Sigmoid colon (tissue), 7 donors: ENCODE measurements at regions of chr2 and their contacts with region 1.

Region 1: GRCh38 chr2:168246483-168247340 is 683 bp downstream of the STK39 start:
- DNase-seq: peak; percentile 76
- H3K4me3 ChIP-seq: peak overlapping the region; percentile 59 to 89 (median 87)
- H3K27ac ChIP-seq: peak overlapping the region; percentile 81 to 91 (median 84)
- H3K4me1 ChIP-seq: peaks cover 0 to 33% (median 23%) of the 10 kb centered on the region in 4 donors
- H3K27me3 ChIP-seq: no peaks in the 10 kb centered on the region
- CTCF ChIP-seq: peak in 2 of 4 experiments; percentile 20 to 38
- EP300 ChIP-seq: no peak
- POLR2A ChIP-seq: no peak

Region 2: DNA sequence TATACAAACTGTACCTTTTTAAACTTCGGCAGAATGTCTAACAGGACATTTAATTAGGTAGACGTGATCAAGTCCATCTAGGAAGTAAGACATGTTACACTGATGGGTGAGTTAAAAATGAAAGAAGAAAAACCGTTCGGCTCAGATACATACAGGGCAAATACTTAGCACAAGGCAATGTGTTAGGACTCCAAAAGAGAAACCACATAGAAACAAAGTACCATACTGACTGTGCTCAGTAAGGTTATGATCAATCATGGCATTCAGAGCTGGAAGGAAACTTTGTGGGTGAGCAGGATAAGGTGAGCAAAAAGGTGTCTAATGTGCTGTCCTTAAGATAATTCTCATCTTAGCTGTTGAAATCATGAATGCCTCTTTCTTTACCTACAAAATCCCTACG is 211.3 kb before region 1 on chr2:
- intact Hi-C with region 1: no loop called
- DNase-seq: no peak
- H3K4me3 ChIP-seq: no peak overlapping the region
- H3K27ac ChIP-seq: no peak overlapping the region
- H3K4me1 ChIP-seq: peaks cover 0 to 8% (median 0%) of the 10 kb centered on the region in 4 donors
- H3K27me3 ChIP-seq: no peaks in the 10 kb centered on the region
- CTCF ChIP-seq: no peak
- EP300 ChIP-seq: no peak
- POLR2A ChIP-seq: no peak

Region 3: GRCh38 chr2:168283212-168283611 is 36.5 kb after region 1 on chr2:
- intact Hi-C with region 1: loop called (anchors 5 kb)
- DNase-seq: no peak
- H3K4me3 ChIP-seq: no peak overlapping the region
- H3K27ac ChIP-seq: no peak overlapping the region
- H3K4me1 ChIP-seq: peaks cover 0 to 7% (median 0%) of the 10 kb centered on the region in 4 donors
- H3K27me3 ChIP-seq: no peaks in the 10 kb centered on the region
- CTCF ChIP-seq: no peak
- EP300 ChIP-seq: no peak
- POLR2A ChIP-seq: no peak

Region 4: DNA sequence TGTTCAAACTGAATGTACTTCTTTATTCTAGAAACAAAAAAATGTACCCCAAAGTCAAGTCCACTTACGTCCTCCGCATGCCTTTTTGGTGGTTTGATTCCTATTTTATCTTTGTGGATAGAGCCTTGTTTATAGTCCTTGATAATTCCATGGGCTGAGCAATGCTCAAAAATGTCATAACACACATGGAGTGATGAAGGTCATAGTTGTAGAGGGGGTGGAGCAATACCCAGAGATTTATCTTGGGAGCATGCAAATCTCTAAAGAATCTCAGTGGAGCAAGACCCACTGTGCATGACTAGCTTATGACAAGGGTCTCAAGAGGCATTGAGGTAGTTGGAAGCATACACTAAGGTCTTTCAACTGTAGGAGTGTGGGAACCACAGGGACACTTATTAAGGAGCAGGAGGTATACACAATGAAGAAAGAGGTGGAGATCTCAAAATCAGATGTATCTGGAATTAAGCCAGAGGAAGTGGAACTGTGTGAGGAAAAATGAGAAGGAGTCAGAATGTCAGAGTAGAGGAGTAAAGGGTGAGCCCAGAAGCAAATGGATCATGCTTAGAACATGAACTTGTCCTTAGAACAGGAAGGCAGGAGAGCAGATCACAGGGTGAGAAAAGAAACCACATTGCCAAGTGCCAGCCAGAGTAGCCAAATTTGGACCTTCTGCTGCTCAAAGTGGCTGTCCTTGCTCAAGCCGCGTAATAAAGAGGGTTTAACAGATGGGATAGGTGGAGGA is 68.8 kb after region 1 on chr2:
- intact Hi-C with region 1: loop called (anchors 2 kb)
- DNase-seq: no peak
- H3K4me3 ChIP-seq: no peak overlapping the region
- H3K27ac ChIP-seq: peak overlapping the region in 1 of 4 donors; percentile 31
- H3K4me1 ChIP-seq: peaks cover 0 to 41% (median 35%) of the 10 kb centered on the region in 4 donors
- H3K27me3 ChIP-seq: no peaks in the 10 kb centered on the region
- CTCF ChIP-seq: no peak
- EP300 ChIP-seq: no peak
- POLR2A ChIP-seq: no peak

Region 5: DNA sequence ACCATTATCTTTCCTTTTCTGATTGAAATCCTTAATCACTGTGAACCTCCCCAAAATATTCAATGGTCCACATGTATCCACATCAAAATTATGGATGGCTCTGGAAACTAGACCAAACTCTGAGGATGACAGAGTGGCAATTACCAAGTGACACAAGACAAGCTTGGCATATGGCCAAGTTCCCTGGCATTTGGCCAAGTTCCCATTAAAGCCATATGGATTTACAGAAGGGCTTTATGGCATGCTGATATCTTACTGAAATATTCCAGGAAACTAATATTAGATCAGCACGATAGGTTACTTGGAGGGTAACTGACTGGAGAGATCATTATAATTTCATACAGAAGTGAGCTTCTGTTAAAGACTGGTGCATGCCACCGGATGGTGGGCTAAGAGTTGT is 187.4 kb after region 1 on chr2:
- intact Hi-C with region 1: no loop called
- DNase-seq: no peak
- H3K4me3 ChIP-seq: no peak overlapping the region
- H3K27ac ChIP-seq: no peak overlapping the region
- H3K4me1 ChIP-seq: no peaks in the 10 kb centered on the region
- H3K27me3 ChIP-seq: no peaks in the 10 kb centered on the region
- CTCF ChIP-seq: no peak
- EP300 ChIP-seq: no peak
- POLR2A ChIP-seq: no peak

Region 6: GRCh38 chr2:168455648-168456520 is 209.2 kb after region 1 on chr2 and contains the start of gene CERS6:
- intact Hi-C with region 1: loop called (anchors 10 kb)
- DNase-seq: peak; percentile 98
- H3K4me3 ChIP-seq: peak within 1 kb of the TSS; percentile 75 to 92 (median 80)
- H3K27ac ChIP-seq: peak within 1 kb of the TSS; percentile 68 to 86 (median 72)
- H3K4me1 ChIP-seq: peaks cover 0 to 5% (median 0%) of the 10 kb centered on the region in 4 donors
- H3K27me3 ChIP-seq: no peaks in the 10 kb centered on the region
- CTCF ChIP-seq: no peak
- EP300 ChIP-seq: no peak
- POLR2A ChIP-seq: peak in 1 of 2 donors; percentile 64
- total RNA-seq, gene CERS6: 9.4 to 15.3 (median 12.3) TPM

Region 7: DNA sequence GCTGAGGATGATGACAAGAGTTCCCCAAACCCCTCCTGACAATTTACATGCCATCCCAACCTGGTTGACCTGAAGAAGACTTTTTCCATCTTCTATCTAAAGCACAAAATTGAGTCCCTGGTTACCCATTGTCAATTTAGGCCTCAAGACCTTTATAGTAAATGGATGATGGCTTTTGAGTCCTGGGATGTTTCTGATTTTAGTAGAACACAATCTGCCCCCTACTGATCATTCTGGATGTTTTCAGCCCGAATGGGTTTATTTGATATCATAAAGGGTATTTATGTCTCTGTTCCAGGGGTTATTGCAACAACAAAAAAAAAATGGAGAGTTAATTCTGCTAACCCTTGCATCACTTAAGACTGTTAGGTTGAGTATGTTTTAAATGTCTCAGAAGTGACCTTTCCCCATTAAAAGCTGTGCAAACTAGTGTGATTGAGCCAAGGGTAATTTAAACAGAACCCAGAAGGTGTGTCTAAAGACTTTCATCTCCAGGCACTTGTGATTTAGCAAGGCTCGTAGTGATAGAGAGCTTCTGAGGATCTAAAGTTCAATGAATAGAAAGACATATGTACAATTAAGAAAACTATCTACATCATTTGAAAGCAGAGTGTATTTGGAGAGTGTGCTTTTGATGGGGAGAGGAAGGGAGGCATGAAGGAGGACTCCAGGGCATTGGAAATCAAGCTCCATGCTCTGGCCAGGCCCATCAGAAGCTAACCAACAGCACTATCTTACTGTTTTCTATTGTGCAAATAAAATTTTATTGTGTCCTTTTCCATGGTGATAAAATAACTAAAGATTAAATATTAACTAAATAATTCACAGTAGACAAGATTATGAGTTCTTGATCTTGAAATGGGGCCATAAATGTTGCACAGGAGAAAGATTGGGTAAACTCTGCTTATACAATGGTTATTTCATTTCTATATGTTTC is 459.1 kb after region 1 on chr2:
- intact Hi-C with region 1: loop called (anchors 10 kb)
- DNase-seq: no peak
- H3K4me3 ChIP-seq: no peak overlapping the region
- H3K27ac ChIP-seq: no peak overlapping the region
- H3K4me1 ChIP-seq: peaks cover 0 to 4% (median under 1%) of the 10 kb centered on the region in 4 donors
- H3K27me3 ChIP-seq: no peaks in the 10 kb centered on the region
- CTCF ChIP-seq: peak in 2 of 4 experiments; percentile 27 to 33
- EP300 ChIP-seq: no peak
- POLR2A ChIP-seq: no peak